ENCODE measurements at regions of chr14 and their contacts with region 1.

Region 1: DNA sequence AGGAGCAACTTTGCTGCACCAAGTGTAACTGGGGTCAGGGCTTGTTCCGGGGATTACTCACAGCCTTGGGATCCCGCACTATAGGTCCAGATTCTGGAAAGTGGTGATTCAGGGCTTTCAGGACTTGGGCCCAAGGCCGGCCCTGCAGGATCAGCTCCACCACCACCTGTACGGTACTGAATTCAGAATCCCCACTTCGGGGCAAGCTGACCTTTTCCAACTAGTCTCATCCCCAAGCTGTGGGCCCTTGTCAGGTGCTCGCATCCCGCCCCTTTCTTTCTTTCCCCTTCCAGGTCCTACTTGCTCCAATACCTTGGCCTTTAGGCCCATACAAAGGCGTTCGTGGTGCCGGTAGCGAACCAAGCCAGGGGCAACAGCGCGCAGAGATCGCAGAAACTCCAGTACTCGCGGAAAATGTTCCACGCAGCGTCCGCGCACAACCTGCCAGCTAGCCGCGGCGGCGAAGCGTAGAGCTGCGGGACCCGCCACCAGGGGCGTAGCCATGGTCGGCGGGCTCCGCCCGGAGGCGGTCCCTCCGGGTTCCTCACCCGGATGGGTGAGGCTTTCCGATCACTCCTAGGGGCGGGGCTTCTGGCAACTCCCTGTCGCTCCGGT is 487 bp downstream of the TINF2 start:
- DNase-seq: peak in 7 of 9 donors; percentile 94 to 98 (median 97)
- ATAC-seq: peak; percentile 89
- H3K4me3 ChIP-seq: peak overlapping the region; percentile 78
- H3K4me3 Mint-ChIP-seq: peak overlapping the region; percentile 84 to 99 (median 98)
- H3K27ac ChIP-seq: peak overlapping the region; percentile 98
- H3K27ac Mint-ChIP-seq: peak overlapping the region; percentile 98 to 100 (median 100)
- H3K4me1 ChIP-seq: peaks cover 40 to 41% of the 10 kb centered on the region in 2 donors
- H3K4me1 Mint-ChIP-seq: peaks cover 42 to 71% (median 62%) of the 10 kb centered on the region in 7 donors
- H3K27me3 ChIP-seq: no peaks in the 10 kb centered on the region
- H3K27me3 Mint-ChIP-seq: no peaks in the 10 kb centered on the region

Region 2: DNA sequence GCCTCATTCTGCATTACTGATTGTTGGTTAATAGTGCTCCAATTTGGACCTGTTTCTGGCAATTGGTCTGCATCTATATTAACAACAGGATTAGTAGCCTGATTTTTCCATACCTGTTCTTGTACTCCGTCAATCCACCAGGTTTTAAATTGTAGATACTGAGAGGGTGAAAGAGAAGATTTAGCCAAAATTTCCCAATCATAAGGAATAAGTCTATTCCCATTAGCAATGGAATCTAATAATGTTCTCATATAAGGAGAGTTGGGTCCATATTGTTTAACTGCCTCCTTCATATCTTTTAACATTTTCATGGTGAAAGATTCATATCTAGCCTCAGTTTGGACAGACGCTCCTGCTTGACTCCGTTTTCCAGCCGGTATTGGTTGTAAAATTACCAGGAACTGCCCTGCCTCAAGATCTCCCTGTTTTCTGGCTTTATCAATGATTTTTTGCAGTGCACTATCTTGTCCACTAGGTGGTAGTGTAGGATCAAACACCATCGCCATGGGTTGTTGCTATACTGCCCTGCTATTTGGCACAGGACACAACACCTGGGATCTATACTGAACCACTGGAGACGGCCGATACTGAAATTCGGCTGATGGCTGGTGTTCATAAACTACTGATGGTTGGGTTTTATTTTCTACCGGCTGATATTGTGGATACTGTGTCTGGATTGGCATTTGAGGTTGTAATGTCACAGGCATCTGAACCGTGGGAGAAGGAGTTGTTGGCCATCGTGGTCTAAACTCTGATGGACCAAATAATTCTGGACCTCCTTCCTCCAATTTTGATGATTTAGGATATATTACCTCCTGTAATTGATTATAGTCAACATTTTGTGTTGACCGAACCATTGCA is 228.1 kb before region 1 on chr14:
- CTCF ChIA-PET with region 1: no interaction called
- POLR2A ChIA-PET with region 1: no interaction called
- intact Hi-C with region 1: loop called in 1 of 2 experiments (anchors 1 kb)
- DNase-seq: peak in 8 of 9 donors; percentile 17 to 76 (median 67)
- ATAC-seq: peak; percentile 94
- H3K4me3 ChIP-seq: no peak overlapping the region
- H3K4me3 Mint-ChIP-seq: no peak overlapping the region
- H3K27ac ChIP-seq: no peak overlapping the region
- H3K27ac Mint-ChIP-seq: no peak overlapping the region
- H3K4me1 ChIP-seq: peaks cover 0 to 6% of the 10 kb centered on the region in 2 donors
- H3K4me1 Mint-ChIP-seq: peaks cover 8 to 28% (median 25%) of the 10 kb centered on the region in 7 donors
- H3K27me3 ChIP-seq: no peaks in the 10 kb centered on the region
- H3K27me3 Mint-ChIP-seq: peaks cover 0 to 15% (median 0%) of the 10 kb centered on the region in 5 donors

Region 3: DNA sequence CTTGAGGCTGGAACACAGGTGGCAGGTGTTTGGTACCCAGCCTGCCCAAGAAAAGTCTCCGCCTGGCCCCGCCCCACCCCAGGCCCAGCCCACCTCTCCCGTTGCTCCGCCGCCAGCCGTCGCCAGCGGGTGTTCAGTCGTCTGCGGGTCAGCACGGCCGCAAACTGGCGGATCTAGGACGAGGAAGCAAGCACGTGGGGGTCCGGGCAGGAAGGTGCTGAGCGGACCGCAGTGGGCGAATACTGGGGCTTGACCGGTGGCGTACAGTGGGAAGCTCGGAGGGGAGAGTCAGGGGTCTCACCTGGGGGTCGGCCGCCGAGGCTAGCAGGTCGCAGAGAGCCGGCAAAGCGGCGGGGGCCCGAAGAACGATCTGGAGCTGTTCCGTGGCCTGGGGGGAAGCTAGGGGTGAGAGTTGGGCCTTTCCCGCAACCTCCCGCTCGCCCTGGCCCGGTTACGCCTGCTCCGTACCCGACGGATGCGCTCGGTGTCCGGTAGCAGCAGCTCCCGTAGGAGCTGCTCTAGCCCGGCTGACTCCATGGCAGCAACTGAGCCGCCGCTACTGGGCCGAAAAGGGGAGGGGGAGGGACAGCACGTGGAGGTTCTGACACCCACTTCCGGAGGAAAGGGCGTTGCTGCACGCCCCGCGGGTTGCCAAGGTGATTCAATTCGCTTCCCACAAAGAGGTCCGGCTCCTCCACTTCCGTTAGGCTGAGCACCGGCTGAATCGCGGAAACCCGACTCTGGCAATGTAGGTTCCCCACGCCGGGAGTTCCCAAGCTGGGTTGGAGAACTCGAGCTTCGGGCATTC is 53.5 kb before region 1 on chr14 and contains the start of gene IPO4:
- CTCF ChIA-PET with region 1: interaction called, 6 read pairs
- POLR2A ChIA-PET with region 1: interaction called, 9 read pairs
- intact Hi-C with region 1: loop called (anchors 1 kb)
- DNase-seq: peak; percentile 75 to 97 (median 94)
- ATAC-seq: peak; percentile 97
- H3K4me3 ChIP-seq: peak within 1 kb of the TSS; percentile 89
- H3K4me3 Mint-ChIP-seq: peak within 1 kb of the TSS; percentile 89 to 96 (median 90)
- H3K27ac ChIP-seq: peak within 1 kb of the TSS; percentile 83
- H3K27ac Mint-ChIP-seq: peak within 1 kb of the TSS; percentile 82 to 96 (median 92)
- H3K4me1 ChIP-seq: peaks cover 15 to 16% of the 10 kb centered on the region in 2 donors
- H3K4me1 Mint-ChIP-seq: peaks cover 24 to 53% (median 47%) of the 10 kb centered on the region in 7 donors
- H3K27me3 ChIP-seq: no peaks in the 10 kb centered on the region
- H3K27me3 Mint-ChIP-seq: no peaks in the 10 kb centered on the region
- total RNA-seq, gene IPO4: 21.5 to 45.2 (median 42.2) TPM

Region 4: GRCh38 chr14:24224618-24225071 is 17.3 kb before region 1 on chr14:
- CTCF ChIA-PET with region 1: interaction called, 6 read pairs
- POLR2A ChIA-PET with region 1: interaction called, 16 read pairs
- intact Hi-C with region 1: no loop called
- DNase-seq: no peak
- ATAC-seq: no peak
- H3K4me3 ChIP-seq: no peak overlapping the region
- H3K4me3 Mint-ChIP-seq: no peak overlapping the region
- H3K27ac ChIP-seq: no peak overlapping the region
- H3K27ac Mint-ChIP-seq: peak overlapping the region in 3 of 9 donors; percentile 33 to 74 (median 66)
- H3K4me1 ChIP-seq: peaks cover 0 to 5% of the 10 kb centered on the region in 2 donors
- H3K4me1 Mint-ChIP-seq: peaks cover 13 to 40% (median 30%) of the 10 kb centered on the region in 7 donors
- H3K27me3 ChIP-seq: no peaks in the 10 kb centered on the region
- H3K27me3 Mint-ChIP-seq: no peaks in the 10 kb centered on the region

Region 5: GRCh38 chr14:24310646-24311604 is 69.0 kb after region 1 on chr14 and contains the start of gene LTB4R:
- CTCF ChIA-PET with region 1: interaction called, 47 read pairs
- POLR2A ChIA-PET with region 1: interaction called, 27 read pairs
- intact Hi-C with region 1: loop called (anchors 1 kb)
- DNase-seq: peak; percentile 61 to 79 (median 73)
- ATAC-seq: peak; percentile 85
- H3K4me3 ChIP-seq: peak within 1 kb of the TSS; percentile 50
- H3K4me3 Mint-ChIP-seq: peak within 1 kb of the TSS; percentile 77 to 91 (median 85)
- H3K27ac ChIP-seq: peak within 1 kb of the TSS; percentile 76
- H3K27ac Mint-ChIP-seq: peak within 1 kb of the TSS; percentile 86 to 95 (median 89)
- H3K4me1 ChIP-seq: peaks cover 60 to 65% of the 10 kb centered on the region in 2 donors
- H3K4me1 Mint-ChIP-seq: peaks cover 58 to 79% (median 72%) of the 10 kb centered on the region in 7 donors
- H3K27me3 ChIP-seq: no peaks in the 10 kb centered on the region
- H3K27me3 Mint-ChIP-seq: no peaks in the 10 kb centered on the region
- total RNA-seq, gene LTB4R: 14.1 to 28.8 (median 26.3) TPM

Region 6: DNA sequence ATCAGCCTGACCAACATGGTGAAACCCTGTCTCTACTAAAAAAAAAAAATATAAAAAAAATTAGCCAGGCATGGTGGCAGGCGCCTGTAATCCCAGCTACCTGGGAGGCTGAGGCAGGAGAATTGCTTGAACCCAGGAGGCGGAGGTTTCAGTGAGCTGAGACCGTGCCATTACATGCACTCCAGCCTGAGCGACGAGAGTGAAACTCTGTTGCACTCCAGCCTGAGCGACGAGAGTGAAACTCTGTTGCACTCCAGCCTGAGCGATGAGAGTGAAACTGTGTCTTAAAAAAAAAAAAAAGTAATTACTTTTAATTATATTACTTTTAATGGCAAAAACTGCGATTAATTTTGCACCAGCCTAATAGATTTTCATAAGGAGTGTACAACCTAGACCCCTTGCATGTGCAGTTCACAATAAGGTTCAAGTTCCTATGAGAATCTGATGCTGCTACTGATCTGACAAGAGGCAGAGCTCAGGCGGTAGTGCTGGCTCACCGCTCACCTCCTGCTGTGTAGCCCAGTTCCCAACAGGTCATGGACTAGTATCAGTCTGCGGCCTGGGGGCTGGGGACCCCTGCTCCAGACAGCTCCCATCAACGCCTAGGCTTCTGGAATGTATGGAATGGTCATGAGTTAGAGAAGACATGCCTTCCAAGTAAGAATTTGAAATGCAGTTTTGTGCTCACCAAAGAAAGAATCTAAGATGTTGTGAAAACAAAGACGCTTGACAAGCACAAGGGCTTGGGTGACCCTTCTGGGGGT is 79.5 kb after region 1 on chr14:
- CTCF ChIA-PET with region 1: no interaction called
- POLR2A ChIA-PET with region 1: no interaction called
- intact Hi-C with region 1: no loop called
- DNase-seq: no peak
- ATAC-seq: no peak
- H3K4me3 ChIP-seq: no peak overlapping the region
- H3K4me3 Mint-ChIP-seq: no peak overlapping the region
- H3K27ac ChIP-seq: no peak overlapping the region
- H3K27ac Mint-ChIP-seq: no peak overlapping the region
- H3K4me1 ChIP-seq: no peaks in the 10 kb centered on the region
- H3K4me1 Mint-ChIP-seq: peaks cover 0 to 20% (median 8%) of the 10 kb centered on the region in 7 donors
- H3K27me3 ChIP-seq: no peaks in the 10 kb centered on the region
- H3K27me3 Mint-ChIP-seq: peaks cover 0 to 13% (median 0%) of the 10 kb centered on the region in 5 donors

Region 7: DNA sequence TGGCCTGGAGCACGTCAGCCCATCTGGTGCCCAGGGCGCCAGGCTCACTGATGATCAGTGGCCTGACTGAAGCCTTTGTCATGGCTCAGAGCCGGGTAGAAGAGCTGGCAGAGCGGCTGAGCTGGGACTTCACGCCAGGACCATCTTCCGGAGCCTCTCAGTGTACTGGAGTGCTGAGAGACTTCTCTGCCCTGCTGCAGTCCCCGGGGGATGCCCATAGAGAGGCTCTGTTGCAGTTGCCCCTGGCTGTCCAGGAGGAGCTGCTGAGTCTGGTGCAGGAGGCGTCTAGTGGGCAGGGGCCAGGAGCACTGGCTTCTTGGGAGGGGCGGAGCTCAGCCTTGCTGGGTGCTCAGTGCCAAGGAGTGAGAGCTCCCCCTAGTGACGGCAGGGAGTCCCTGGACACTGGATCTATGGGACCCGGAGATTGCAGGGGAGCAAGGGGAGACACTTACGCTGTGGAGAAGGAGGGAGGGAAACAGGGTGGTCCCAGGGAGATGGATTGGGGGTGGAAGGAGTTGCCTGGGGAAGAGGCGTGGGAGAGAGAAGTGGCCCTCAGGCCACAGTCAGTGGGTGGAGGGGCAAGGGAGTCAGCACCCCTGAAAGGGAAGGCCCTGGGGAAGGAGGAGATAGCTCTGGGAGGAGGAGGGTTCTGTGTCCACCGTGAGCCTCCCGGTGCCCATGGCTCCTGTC is 189.8 kb after region 1 on chr14:
- CTCF ChIA-PET with region 1: interaction called, 21 read pairs
- POLR2A ChIA-PET with region 1: interaction called, 49 read pairs
- intact Hi-C with region 1: loop called (anchors 1 kb)
- DNase-seq: peak; percentile 76 to 91 (median 86)
- ATAC-seq: peak; percentile 77
- H3K4me3 ChIP-seq: peak overlapping the region; percentile 96
- H3K4me3 Mint-ChIP-seq: peak overlapping the region; percentile 82 to 96 (median 91)
- H3K27ac ChIP-seq: peak overlapping the region; percentile 99
- H3K27ac Mint-ChIP-seq: peak overlapping the region; percentile 51 to 97 (median 96)
- H3K4me1 ChIP-seq: peaks cover 24 to 41% of the 10 kb centered on the region in 2 donors
- H3K4me1 Mint-ChIP-seq: peaks cover 19 to 59% (median 53%) of the 10 kb centered on the region in 7 donors
- H3K27me3 ChIP-seq: no peaks in the 10 kb centered on the region
- H3K27me3 Mint-ChIP-seq: no peaks in the 10 kb centered on the region